SK-MEL-5 (cell line): ENCODE measurements at regions of chr9 and their contacts with region 1.

Region 1: GRCh38 chr9:763692-764524 is 77.6 kb upstream of the DMRT1 start:
- DNase-seq: peak; percentile 91

Region 2: DNA sequence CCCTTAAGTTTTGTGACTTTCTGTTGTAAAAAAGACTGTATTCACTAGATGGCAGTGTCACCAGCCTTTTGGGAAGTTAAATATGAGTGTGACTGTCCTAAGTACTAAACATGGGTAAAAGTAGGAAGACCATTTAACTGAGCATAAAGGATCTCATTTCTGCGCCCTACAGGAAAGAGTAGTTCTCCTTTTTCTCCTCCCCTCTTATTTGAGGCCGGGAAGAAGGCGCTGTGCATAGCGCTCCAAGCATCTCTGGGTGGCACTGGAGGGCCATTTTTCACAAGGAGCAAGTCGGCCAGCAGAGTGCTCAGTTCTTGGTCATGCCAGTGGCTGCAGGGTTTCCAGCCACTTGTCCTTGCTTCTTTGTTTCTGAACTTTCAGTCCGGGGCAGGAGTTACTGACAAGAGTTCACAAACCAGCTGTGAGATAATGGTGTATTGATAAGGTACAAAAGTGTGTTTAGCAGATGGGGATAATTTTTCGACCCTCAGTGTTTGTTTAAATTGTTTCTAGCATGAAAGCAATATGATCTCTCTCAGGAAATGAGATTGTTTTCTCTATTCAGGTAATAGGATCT is 150.0 kb before region 1 on chr9:
- in situ Hi-C with region 1: loop called (anchors 25 kb)
- DNase-seq: peak; percentile 91